ENCODE measurements at regions of chr13 and their contacts with region 1.

Region 1: GRCh38 chr13:99386911-99387788 is 80.0 kb upstream of the GPR183 start:
- DNase-seq: peak; percentile 44 to 48
- H3K4me3 ChIP-seq: no peak overlapping the region
- H3K27ac ChIP-seq: no peak overlapping the region
- H3K4me1 ChIP-seq: no peaks in the 10 kb centered on the region
- H3K27me3 ChIP-seq: no peaks in the 10 kb centered on the region
- CTCF ChIP-seq: peak; percentile 86

Region 2: DNA sequence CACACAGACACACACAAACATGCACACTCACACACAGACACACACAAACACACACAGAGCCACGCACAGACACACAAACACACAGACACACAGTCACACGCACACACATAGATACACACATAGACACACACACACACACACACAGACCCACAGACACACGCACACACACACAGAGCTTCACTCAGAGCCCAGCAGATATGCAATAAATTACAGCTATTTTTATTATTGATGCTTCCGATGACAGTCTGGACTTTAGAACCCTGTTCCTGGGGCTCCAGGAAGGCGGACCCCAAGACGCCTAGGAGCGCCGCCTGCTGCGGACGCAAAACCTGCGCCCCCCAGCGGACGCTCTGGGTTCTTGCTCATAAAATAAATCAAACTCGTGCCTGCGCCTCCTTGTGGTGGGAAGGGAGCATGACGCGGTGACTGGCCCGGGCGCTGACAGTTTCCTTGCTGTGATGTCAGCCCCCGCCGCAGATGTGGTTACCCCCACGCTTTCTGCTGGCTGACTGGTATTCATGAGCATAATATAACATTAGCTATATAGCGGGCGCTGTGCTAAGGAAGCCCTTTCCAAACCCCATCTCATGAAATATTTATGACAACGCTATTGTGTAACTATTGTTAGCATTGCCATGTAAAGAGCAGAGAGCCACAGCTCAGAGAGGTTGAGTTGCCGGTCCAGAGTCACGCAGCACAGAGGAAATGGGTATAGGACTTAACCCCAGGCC is 49.7 kb after region 1 on chr13:
- CTCF ChIA-PET with region 1: interaction called, 3 read pairs
- POLR2A ChIA-PET with region 1: no interaction called
- intact Hi-C with region 1: loop called (anchors 1 kb)
- DNase-seq: peak; percentile 73 to 75
- H3K4me3 ChIP-seq: no peak overlapping the region; the same call in 1 of the 2 replicates
- H3K27ac ChIP-seq: no peak overlapping the region
- H3K4me1 ChIP-seq: peaks cover 43% of the 10 kb centered on the region
- H3K27me3 ChIP-seq: no peaks in the 10 kb centered on the region
- CTCF ChIP-seq: peak; percentile 100

Region 3: DNA sequence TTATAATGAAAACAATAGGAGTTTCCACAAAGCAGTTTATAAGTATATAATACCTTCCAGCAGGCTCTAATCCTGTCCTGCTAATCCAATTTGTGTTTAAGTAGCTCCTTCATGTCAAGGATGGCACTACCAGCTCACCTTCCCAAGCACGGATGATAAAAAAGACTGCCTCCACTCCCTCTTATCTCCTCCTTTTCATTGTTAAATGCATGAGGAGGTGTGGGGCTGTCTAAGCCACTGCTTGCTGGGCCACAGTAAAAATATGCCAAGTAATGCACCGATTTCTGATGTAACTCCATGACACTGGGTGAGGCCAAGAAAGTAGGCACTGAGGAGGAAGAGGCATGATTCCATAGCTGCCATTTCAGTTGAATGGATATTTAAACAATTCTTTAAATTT is 391.4 kb after region 1 on chr13:
- CTCF ChIA-PET with region 1: no interaction called
- POLR2A ChIA-PET with region 1: no interaction called
- intact Hi-C with region 1: no loop called
- DNase-seq: no peak
- H3K4me3 ChIP-seq: no peak overlapping the region
- H3K27ac ChIP-seq: no peak overlapping the region
- H3K4me1 ChIP-seq: no peaks in the 10 kb centered on the region
- H3K27me3 ChIP-seq: no peaks in the 10 kb centered on the region
- CTCF ChIP-seq: no peak